ENCODE measurements at regions of chr1 and their contacts with region 1.

Region 1: DNA sequence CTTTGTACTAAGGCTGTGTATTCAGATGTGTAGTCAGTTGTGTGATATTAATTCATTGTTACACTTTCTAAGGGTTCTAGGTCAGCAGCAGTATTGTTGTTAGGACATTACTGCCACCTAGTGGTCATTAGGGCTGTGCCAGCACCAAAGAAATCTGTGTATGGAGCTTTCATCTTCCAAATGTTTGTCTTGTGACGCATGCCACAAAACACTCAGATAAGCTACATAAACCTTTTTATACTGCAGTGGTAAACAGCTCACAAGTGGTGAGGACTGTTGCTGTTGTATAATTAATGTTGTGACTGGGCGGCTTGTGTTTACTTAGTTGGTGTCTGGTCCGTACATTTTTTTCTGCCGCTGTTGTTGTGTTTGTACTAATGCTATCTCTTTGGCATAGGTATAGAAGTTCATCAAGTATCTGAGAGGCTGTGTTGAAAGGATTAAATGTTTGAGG is 51.7 kb downstream of the S1PR1 start:
- DNase-seq: no peak
- H3K4me3 ChIP-seq: no peak overlapping the region
- H3K27ac ChIP-seq: no peak overlapping the region
- H3K4me1 ChIP-seq: peaks cover 0 to 4% (median 2%) of the 10 kb centered on the region in 4 experiments; a peak in 2 of 7 replicates
- H3K27me3 ChIP-seq: no peaks in the 10 kb centered on the region
- CTCF ChIP-seq: peak in 2 of 3 experiments; percentile 66 to 88; a peak in 3 of 4 replicates
- EP300 ChIP-seq: no peak
- POLR2A ChIP-seq: no peak
- RAD21 ChIP-seq: peak; percentile 84 to 89

Region 2: DNA sequence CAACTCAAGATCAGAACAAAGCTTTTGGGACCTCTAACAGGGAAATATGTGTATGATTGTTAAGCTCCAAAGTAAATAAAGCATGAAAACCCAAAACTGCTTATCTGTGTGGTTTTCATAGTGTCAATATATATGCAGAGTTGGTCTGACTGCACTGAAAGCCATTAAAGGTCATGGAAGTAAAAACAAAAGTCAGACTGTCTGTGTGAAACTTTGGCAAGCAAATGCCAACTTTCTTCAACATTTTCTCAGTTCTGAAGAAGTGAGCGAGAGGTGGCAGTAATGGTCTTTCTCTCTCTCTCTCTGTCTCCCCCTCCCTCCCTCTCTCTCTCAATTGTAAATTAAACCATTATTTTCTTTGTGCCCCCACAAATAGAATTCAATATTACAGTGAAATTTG is 151.8 kb before region 1 on chr1:
- CTCF ChIA-PET with region 1: interaction called, 82 read pairs
- POLR2A ChIA-PET with region 1: no interaction called
- DNase-seq: no peak
- H3K4me3 ChIP-seq: peak overlapping the region in 1 of 4 experiments; percentile 42; a peak in 1 of 8 replicates
- H3K27ac ChIP-seq: no peak overlapping the region
- H3K4me1 ChIP-seq: peaks cover 0 to 10% (median 1%) of the 10 kb centered on the region in 4 experiments; a peak in 2 of 7 replicates
- H3K27me3 ChIP-seq: no peaks in the 10 kb centered on the region
- CTCF ChIP-seq: peak in 2 of 3 experiments; percentile 38 to 53; a peak in 2 of 4 replicates
- EP300 ChIP-seq: no peak
- POLR2A ChIP-seq: no peak
- RAD21 ChIP-seq: peak; percentile 73

Region 3: GRCh38 chr1:101247404-101248287 is 40.9 kb before region 1 on chr1:
- CTCF ChIA-PET with region 1: interaction called, 15 read pairs
- POLR2A ChIA-PET with region 1: no interaction called
- DNase-seq: no peak
- H3K4me3 ChIP-seq: no peak overlapping the region
- H3K27ac ChIP-seq: no peak overlapping the region
- H3K4me1 ChIP-seq: no peaks in the 10 kb centered on the region
- H3K27me3 ChIP-seq: no peaks in the 10 kb centered on the region
- CTCF ChIP-seq: no peak
- EP300 ChIP-seq: no peak
- POLR2A ChIP-seq: no peak
- RAD21 ChIP-seq: no peak

Region 4: GRCh38 chr1:101302831-101303511 is 14.5 kb after region 1 on chr1:
- CTCF ChIA-PET with region 1: interaction called, 19 read pairs
- POLR2A ChIA-PET with region 1: no interaction called
- DNase-seq: no peak
- H3K4me3 ChIP-seq: no peak overlapping the region
- H3K27ac ChIP-seq: no peak overlapping the region
- H3K4me1 ChIP-seq: no peaks in the 10 kb centered on the region
- H3K27me3 ChIP-seq: no peaks in the 10 kb centered on the region
- CTCF ChIP-seq: no peak
- EP300 ChIP-seq: no peak
- POLR2A ChIP-seq: no peak
- RAD21 ChIP-seq: no peak

Region 5: GRCh38 chr1:101357444-101357986 is 69.0 kb after region 1 on chr1:
- CTCF ChIA-PET with region 1: interaction called, 10 read pairs
- POLR2A ChIA-PET with region 1: no interaction called
- DNase-seq: peak; percentile 23 to 66
- H3K4me3 ChIP-seq: no peak overlapping the region
- H3K27ac ChIP-seq: no peak overlapping the region
- H3K4me1 ChIP-seq: no peaks in the 10 kb centered on the region
- H3K27me3 ChIP-seq: no peaks in the 10 kb centered on the region
- CTCF ChIP-seq: peak; percentile 3 to 88 (median 67)
- EP300 ChIP-seq: no peak
- POLR2A ChIP-seq: no peak
- RAD21 ChIP-seq: peak; percentile 70 to 73